ENCODE measurements at regions of chr6 and their contacts with region 1.

Region 1: DNA sequence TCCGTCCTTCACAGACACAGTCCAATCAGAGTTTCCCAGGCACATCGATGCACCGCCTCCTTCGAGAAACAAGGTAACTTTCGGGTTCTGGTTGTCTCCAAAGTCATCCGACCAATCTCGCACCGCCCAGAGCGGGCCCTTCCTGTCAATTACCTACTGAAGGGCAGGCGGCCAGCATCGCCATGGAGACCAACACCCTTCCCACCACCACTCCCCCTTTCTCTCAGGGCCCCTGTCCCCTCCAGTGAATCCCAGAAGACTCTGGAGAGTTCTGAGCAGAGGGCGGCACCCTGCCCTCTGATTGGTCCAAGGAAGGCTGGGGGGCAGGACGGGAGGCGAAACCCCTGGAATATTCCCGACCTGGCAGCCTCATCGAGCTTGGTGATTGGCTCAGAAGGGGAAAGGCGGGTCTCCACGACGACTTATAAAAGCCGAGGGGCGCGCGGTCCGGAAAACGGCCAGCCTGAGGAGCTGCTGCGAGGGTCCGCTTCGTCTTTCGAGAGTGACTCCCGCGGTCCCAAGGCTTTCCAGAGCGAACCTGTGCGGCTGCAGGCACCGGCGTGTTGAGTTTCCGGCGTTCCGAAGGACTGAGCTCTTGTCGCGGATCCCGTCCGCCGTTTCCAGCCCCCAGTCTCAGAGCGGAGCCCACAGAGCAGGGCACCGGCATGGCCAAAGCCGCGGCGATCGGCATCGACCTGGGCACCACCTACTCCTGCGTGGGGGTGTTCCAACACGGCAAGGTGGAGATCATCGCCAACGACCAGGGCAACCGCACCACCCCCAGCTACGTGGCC is at the start of gene HSPA1B:
- DNase-seq: peak; percentile 98 to 100
- H3K4me3 ChIP-seq: peak within 1 kb of the TSS; percentile 71
- H3K4me3 Mint-ChIP-seq: peak within 1 kb of the TSS; percentile 96
- H3K27ac Mint-ChIP-seq: peak within 1 kb of the TSS; percentile 99
- H3K4me1 ChIP-seq: peaks cover 39% of the 10 kb centered on the region
- H3K4me1 Mint-ChIP-seq: peaks cover 10% of the 10 kb centered on the region
- H3K27me3 ChIP-seq: no peaks in the 10 kb centered on the region
- H3K27me3 Mint-ChIP-seq: no peaks in the 10 kb centered on the region
- CTCF ChIP-seq: no peak
- total RNA-seq, gene HSPA1B: 99.0 and 112 TPM in 2 replicates

Region 2: DNA sequence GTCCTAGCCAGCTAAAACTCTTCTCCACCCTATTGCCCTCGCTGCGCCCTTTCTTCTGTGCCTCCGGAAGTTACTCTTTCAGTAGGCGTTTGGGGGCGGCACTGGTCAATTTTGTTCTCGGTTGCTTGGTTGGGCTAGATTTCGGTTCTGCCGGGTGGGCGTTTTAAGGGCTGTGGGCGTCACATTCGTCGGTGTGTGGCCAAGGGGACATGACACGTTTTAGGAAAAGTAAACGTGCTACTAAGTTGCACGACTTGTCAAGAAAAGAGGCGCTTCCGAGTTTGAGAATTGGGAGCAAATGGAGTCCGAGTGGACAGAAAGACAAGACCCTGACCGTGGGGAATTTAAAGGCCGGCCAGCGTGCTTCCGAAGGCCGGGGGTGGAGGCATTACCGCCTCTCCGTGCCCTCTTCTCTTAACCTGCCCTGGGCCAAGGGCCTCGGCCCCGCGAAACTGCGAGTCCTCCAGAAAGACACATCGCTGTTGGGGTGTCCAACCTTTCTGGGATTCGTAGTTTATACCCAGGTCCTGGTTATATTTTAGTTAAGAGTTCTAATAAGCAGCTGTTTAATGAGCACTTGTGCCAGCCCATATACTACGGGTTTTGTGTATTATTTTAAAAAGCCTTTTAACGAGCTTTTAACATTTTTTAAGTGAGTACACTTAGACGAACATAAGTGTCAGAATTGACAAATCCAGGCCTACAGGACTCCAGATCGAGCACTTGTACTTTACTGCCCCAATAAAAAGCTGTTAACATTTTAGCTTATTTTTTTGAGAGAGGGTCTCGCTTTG is 174.4 kb before region 1 on chr6:
- CTCF ChIA-PET with region 1: no interaction called
- POLR2A ChIA-PET with region 1: interaction called, 19 read pairs
- intact Hi-C with region 1: no loop called
- DNase-seq: peak in 1 of 2 experiments; percentile 90
- H3K4me3 ChIP-seq: peak overlapping the region; percentile 97
- H3K4me3 Mint-ChIP-seq: peak overlapping the region; percentile 98
- H3K27ac Mint-ChIP-seq: peak overlapping the region; percentile 99
- H3K4me1 ChIP-seq: peaks cover 36% of the 10 kb centered on the region
- H3K4me1 Mint-ChIP-seq: peaks cover 26% of the 10 kb centered on the region
- H3K27me3 ChIP-seq: no peaks in the 10 kb centered on the region
- H3K27me3 Mint-ChIP-seq: no peaks in the 10 kb centered on the region
- CTCF ChIP-seq: peak in 1 of 2 experiments; percentile 16

Region 3: DNA sequence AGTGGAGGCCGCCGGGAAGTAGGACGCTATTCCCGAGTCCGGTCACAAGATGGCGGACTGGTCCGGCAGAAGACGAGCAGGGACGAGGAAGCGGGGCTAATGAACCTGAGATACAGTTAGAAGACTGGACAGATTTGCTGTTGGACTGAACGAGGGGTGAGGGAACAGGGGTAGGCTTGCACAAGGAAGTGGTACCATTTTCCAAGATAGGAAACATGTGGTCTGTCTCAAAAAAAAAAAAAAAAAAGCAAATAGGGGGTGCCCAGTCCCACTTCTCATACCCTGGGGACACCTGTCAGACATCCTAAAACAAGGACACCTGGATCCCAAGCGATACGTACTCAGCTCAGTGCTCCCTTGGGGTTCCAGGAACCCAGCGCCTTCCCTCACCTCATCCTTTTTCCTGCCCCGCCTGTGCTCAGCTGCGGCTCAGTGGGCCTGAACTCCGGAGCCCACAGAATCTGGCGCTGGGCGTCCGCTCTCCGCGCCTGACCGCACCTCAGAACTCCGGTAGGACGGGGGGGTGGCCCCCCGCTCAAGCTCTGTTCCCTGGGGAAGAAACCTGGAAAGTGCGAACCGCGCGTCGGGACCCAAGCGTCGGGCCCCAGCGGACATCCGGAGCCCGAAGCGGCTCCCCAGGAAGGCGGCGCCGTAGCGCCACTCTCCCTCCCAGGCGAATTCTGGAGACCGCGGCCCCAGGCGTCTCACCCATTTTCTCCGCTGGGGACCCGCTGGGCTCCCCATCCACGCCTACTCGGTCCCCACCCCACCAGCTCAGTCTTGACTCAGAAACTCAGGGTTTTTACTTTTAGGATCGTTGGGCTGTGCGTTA is 146.4 kb before region 1 on chr6 and contains the start of gene LY6G5C:
- CTCF ChIA-PET with region 1: interaction called, 4 read pairs
- POLR2A ChIA-PET with region 1: interaction called, 3 read pairs
- intact Hi-C with region 1: loop called (anchors 1 kb)
- DNase-seq: peak; percentile 85 to 87
- H3K4me3 ChIP-seq: peak within 1 kb of the TSS; percentile 49
- H3K4me3 Mint-ChIP-seq: peak within 1 kb of the TSS; percentile 76
- H3K27ac Mint-ChIP-seq: peak within 1 kb of the TSS; percentile 54
- H3K4me1 ChIP-seq: peaks cover 25% of the 10 kb centered on the region
- H3K4me1 Mint-ChIP-seq: peaks cover 17% of the 10 kb centered on the region
- H3K27me3 ChIP-seq: no peaks in the 10 kb centered on the region
- H3K27me3 Mint-ChIP-seq: no peaks in the 10 kb centered on the region
- CTCF ChIP-seq: peak; percentile 66 to 81
- total RNA-seq, gene LY6G5C: 2.0 and 2.9 TPM in 2 replicates

Region 4: DNA sequence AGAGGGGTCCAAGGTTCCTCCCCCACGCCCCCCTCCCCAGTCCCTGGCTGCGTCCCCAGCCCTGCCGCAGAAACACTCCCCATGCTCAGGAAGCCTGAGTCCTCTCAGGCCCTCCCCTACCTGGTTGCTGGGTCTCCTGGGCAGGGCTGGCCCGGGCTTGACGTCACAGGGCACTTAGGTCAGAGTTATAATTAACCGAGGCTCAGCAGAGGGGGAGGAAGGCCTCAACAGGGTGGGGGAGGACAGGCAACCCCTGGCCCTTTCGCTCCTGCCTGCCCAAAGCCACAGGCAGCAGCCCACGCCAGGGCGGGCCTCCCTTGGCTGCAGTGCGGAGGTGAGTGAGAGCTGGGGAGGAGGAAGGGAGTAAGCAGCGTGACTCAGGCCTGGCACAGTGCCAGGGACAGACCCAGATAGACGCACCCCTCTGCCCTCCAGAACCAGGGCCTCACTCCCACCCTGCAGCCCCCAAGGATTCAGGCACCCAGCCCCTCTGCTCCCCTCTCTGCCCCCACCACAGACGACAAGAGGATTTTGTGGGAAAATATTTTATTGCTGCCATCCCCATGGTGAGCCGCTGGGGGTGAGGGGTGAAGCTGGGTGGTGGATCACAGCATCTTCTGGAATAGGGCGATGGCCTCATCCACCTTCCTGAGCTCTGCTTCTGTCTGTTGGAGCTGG is 50.4 kb before region 1 on chr6 and contains the start of gene VWA7:
- CTCF ChIA-PET with region 1: interaction called, 8 read pairs
- POLR2A ChIA-PET with region 1: interaction called, 8 read pairs
- intact Hi-C with region 1: loop called (anchors 1 kb)
- DNase-seq: peak; percentile 69 to 85
- H3K4me3 ChIP-seq: no peak within 1 kb of the TSS
- H3K4me3 Mint-ChIP-seq: no peak within 1 kb of the TSS
- H3K27ac Mint-ChIP-seq: peak within 1 kb of the TSS; percentile 59
- H3K4me1 ChIP-seq: peaks cover 23% of the 10 kb centered on the region
- H3K4me1 Mint-ChIP-seq: peaks cover 5% of the 10 kb centered on the region
- H3K27me3 ChIP-seq: no peaks in the 10 kb centered on the region
- H3K27me3 Mint-ChIP-seq: no peaks in the 10 kb centered on the region
- CTCF ChIP-seq: no peak
- total RNA-seq, gene VWA7: 0.61 and 1.5 TPM in 2 replicates

Region 5: GRCh38 chr6:31806465-31807272 is 20.8 kb before region 1 on chr6 and contains the start of gene LSM2:
- CTCF ChIA-PET with region 1: interaction called, 9 read pairs
- POLR2A ChIA-PET with region 1: interaction called, 29 read pairs
- intact Hi-C with region 1: loop called (anchors 1 kb)
- DNase-seq: peak; percentile 96 to 98
- H3K4me3 ChIP-seq: peak within 1 kb of the TSS; percentile 68
- H3K4me3 Mint-ChIP-seq: peak within 1 kb of the TSS; percentile 92
- H3K27ac Mint-ChIP-seq: peak within 1 kb of the TSS; percentile 89
- H3K4me1 ChIP-seq: peaks cover 12% of the 10 kb centered on the region; the same call in 1 of the 2 replicates
- H3K4me1 Mint-ChIP-seq: peaks cover 12% of the 10 kb centered on the region
- H3K27me3 ChIP-seq: no peaks in the 10 kb centered on the region
- H3K27me3 Mint-ChIP-seq: no peaks in the 10 kb centered on the region
- CTCF ChIP-seq: peak; percentile 25 to 36
- total RNA-seq, gene LSM2: 56.3 and 61.2 TPM in 2 replicates

Region 6: GRCh38 chr6:31892821-31893220 is 65.3 kb after region 1 on chr6:
- CTCF ChIA-PET with region 1: no interaction called
- POLR2A ChIA-PET with region 1: no interaction called
- intact Hi-C with region 1: no loop called
- DNase-seq: no peak
- H3K4me3 ChIP-seq: no peak overlapping the region
- H3K4me3 Mint-ChIP-seq: no peak overlapping the region
- H3K27ac Mint-ChIP-seq: no peak overlapping the region
- H3K4me1 ChIP-seq: peaks cover 3% of the 10 kb centered on the region
- H3K4me1 Mint-ChIP-seq: no peaks in the 10 kb centered on the region
- H3K27me3 ChIP-seq: no peaks in the 10 kb centered on the region
- H3K27me3 Mint-ChIP-seq: no peaks in the 10 kb centered on the region
- CTCF ChIP-seq: no peak

Region 7: DNA sequence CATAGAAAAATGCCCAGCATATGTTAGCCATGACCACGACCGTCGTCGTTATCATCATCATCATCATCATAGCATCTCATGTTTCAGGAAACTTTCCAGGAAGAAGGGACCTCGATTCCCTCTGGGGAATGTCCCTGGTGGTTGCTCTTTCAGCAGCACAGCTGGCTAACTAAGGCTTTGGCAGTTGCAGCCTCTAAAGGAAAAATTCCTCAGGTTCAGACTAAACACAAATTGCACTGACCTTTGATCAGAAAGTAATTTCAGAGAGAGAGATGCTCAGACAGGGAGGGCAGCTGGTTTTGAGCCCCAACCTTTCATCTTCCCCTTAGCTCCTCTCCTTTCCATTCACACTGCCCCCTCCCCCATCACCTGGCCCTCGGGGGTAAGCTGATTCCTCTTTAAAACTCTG is 112.8 kb after region 1 on chr6:
- CTCF ChIA-PET with region 1: interaction called, 13 read pairs
- POLR2A ChIA-PET with region 1: no interaction called
- intact Hi-C with region 1: no loop called
- DNase-seq: peak; percentile 66 to 73
- H3K4me3 ChIP-seq: no peak overlapping the region
- H3K4me3 Mint-ChIP-seq: peak overlapping the region; percentile 42
- H3K27ac Mint-ChIP-seq: peak overlapping the region; percentile 89
- H3K4me1 ChIP-seq: peaks cover 28% of the 10 kb centered on the region
- H3K4me1 Mint-ChIP-seq: peaks cover 26% of the 10 kb centered on the region
- H3K27me3 ChIP-seq: no peaks in the 10 kb centered on the region
- H3K27me3 Mint-ChIP-seq: no peaks in the 10 kb centered on the region
- CTCF ChIP-seq: peak; percentile 8